ENCODE measurements at regions of chr6 and their contacts with region 1.

Region 1: DNA sequence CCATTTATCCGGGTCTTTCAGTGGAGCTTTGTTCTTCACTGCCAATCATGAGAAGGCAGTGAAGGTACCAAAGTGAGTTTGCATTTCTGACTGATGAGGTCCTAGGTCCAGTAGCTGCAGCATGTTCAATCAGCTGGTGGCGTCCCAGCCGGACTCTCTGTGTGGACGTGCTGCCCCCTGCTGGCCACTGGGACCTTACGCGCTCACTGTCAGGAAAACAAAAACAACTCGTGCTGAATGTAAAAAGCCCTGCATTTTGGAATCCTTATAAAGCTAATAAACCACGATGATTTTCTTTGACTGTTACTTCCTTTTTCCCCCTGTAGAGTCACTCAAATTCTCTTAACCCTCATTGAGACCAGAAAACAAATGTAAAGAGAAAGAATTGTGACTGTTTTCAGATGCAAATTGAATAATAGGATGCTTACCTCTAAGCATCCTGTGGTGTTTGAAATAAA is 4.9 kb upstream of the CD24 start:
- DNase-seq: peak; percentile 24
- ATAC-seq: peak; percentile 84
- H3K4me3 ChIP-seq: no peak overlapping the region
- H3K27ac ChIP-seq: no peak overlapping the region
- H3K4me1 ChIP-seq: no peaks in the 10 kb centered on the region
- H3K27me3 ChIP-seq: no peaks in the 10 kb centered on the region; a peak in 1 of 4 replicates
- CTCF ChIP-seq: peak; percentile 93 to 95 (median 95)
- EP300 ChIP-seq: no peak
- POLR2A ChIP-seq: no peak
- RAD21 ChIP-seq: peak; percentile 99

Region 2: DNA sequence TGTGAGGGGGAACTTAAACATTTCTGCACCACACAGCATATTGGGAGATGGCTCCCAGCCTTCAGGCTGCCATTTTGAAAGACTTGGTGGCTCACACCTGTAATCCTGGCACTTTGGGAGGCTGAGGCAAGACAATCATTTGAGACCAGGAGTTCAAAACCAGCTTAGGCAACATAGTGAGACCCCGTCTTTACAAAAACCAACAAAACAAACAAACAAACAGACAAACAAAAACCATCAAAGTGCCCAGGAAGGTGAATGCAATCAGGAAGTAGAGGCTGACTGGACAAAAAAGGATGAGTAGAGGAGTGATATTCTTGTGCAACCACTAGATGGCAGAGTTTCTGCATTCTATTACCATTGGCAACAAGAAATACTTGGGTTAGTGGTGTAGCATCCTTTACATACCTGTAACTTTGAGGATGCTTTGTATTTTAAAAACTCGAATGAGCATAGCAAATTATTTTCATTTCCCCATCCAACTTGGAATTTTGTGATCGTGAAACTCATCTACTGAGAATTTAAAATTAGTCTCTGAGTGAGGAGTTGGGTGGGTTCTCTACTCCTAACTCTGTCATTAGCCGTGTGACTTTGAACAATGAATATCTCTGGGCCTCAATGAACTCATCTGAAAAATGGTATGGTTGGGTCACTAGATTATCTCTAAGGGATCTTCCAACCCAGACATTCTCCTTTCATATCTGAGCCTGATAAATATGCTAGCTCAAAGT is 534.5 kb before region 1 on chr6:
- CTCF ChIA-PET with region 1: interaction called, 63 read pairs
- POLR2A ChIA-PET with region 1: no interaction called
- RAD21 ChIA-PET with region 1: interaction called, 15 read pairs
- SMC1A ChIA-PET with region 1: interaction called, 34 read pairs
- in situ Hi-C with region 1: loop called (anchors 5 kb)
- intact Hi-C with region 1: loop called (anchors 1 kb)
- DNase-seq: peak; percentile 46
- ATAC-seq: peak; percentile 92
- H3K4me3 ChIP-seq: no peak overlapping the region
- H3K27ac ChIP-seq: no peak overlapping the region
- H3K4me1 ChIP-seq: peaks cover 8% of the 10 kb centered on the region
- H3K27me3 ChIP-seq: no peaks in the 10 kb centered on the region; a peak in 1 of 4 replicates
- CTCF ChIP-seq: peak; percentile 60 to 79 (median 78)
- EP300 ChIP-seq: no peak
- POLR2A ChIP-seq: no peak
- RAD21 ChIP-seq: peak; percentile 79

Region 3: GRCh38 chr6:106608062-106608668 is 371.3 kb before region 1 on chr6:
- CTCF ChIA-PET with region 1: interaction called, 85 read pairs
- POLR2A ChIA-PET with region 1: no interaction called
- RAD21 ChIA-PET with region 1: interaction called, 20 read pairs
- SMC1A ChIA-PET with region 1: interaction called, 35 read pairs
- in situ Hi-C with region 1: loop called (anchors 5 kb)
- intact Hi-C with region 1: loop called (anchors 1 kb)
- DNase-seq: peak; percentile 40
- ATAC-seq: peak; percentile 95
- H3K4me3 ChIP-seq: no peak overlapping the region
- H3K27ac ChIP-seq: no peak overlapping the region
- H3K4me1 ChIP-seq: no peaks in the 10 kb centered on the region; the same call in 1 of the 2 replicates
- H3K27me3 ChIP-seq: no peaks in the 10 kb centered on the region
- CTCF ChIP-seq: peak; percentile 68 to 72 (median 68)
- EP300 ChIP-seq: no peak
- POLR2A ChIP-seq: no peak
- RAD21 ChIP-seq: peak; percentile 76

Region 4: GRCh38 chr6:106629103-106629858 is 350.2 kb before region 1 on chr6 and contains the starts of genes QRSL1 and RTN4IP1:
- CTCF ChIA-PET with region 1: interaction called, 10 read pairs
- POLR2A ChIA-PET with region 1: interaction called, 12 read pairs
- RAD21 ChIA-PET with region 1: interaction called, 3 read pairs
- SMC1A ChIA-PET with region 1: interaction called, 4 read pairs
- in situ Hi-C with region 1: no loop called
- intact Hi-C with region 1: no loop called
- DNase-seq: peak; percentile 88
- ATAC-seq: peak; percentile 89
- H3K4me3 ChIP-seq: peak within 1 kb of the TSS; percentile 95
- H3K27ac ChIP-seq: peak within 1 kb of the TSS; percentile 81
- H3K4me1 ChIP-seq: peaks cover 16% of the 10 kb centered on the region; the same call in 1 of the 2 replicates
- H3K27me3 ChIP-seq: no peaks in the 10 kb centered on the region
- CTCF ChIP-seq: no peak
- EP300 ChIP-seq: 0 out of 4 replicates have a peak, but pooled peaks of 1 of the 2 experiments have one; percentile 6
- POLR2A ChIP-seq: peak; percentile 81
- RAD21 ChIP-seq: no peak
- polyA plus RNA-seq, gene QRSL1: 11.9 to 15.1 TPM
- polyA plus RNA-seq, gene RTN4IP1: 15.8 to 17.0 TPM

Region 5: GRCh38 chr6:106778943-106779342 is 200.5 kb before region 1 on chr6:
- CTCF ChIA-PET with region 1: no interaction called
- POLR2A ChIA-PET with region 1: no interaction called
- RAD21 ChIA-PET with region 1: no interaction called
- SMC1A ChIA-PET with region 1: no interaction called
- in situ Hi-C with region 1: no loop called
- intact Hi-C with region 1: no loop called
- DNase-seq: no peak
- ATAC-seq: no peak
- H3K4me3 ChIP-seq: no peak overlapping the region
- H3K27ac ChIP-seq: no peak overlapping the region
- H3K4me1 ChIP-seq: no peaks in the 10 kb centered on the region
- H3K27me3 ChIP-seq: no peaks in the 10 kb centered on the region
- CTCF ChIP-seq: no peak
- EP300 ChIP-seq: no peak
- POLR2A ChIP-seq: no peak
- RAD21 ChIP-seq: no peak

Region 6: DNA sequence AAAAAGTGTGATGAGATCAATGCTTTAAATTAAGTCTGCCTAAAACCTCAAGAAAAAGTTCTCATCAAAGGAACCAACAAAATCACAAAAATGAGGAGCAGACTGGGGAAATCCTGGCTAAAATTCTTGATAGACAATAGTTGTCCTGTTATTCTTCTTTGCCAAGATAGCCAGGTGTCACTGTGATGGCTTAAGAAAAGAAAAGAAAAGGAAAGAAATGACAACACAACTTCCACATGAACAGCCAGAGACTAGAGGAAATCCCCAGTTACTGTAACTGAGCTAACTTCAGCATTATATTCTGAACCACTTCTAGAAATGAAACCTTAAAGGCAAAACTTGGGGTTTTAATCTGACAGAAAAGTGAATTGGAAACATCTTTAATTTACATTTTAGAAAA is 134.5 kb before region 1 on chr6:
- CTCF ChIA-PET with region 1: interaction called, 3 read pairs
- POLR2A ChIA-PET with region 1: no interaction called
- RAD21 ChIA-PET with region 1: interaction called, 3 read pairs
- SMC1A ChIA-PET with region 1: interaction called, 3 read pairs
- in situ Hi-C with region 1: no loop called
- intact Hi-C with region 1: loop called (anchors 5 kb)
- DNase-seq: peak; percentile 65
- ATAC-seq: peak; percentile 75
- H3K4me3 ChIP-seq: peak overlapping the region; percentile 27; the same call in 1 of the 2 replicates
- H3K27ac ChIP-seq: peak overlapping the region; percentile 96
- H3K4me1 ChIP-seq: peaks cover 44% of the 10 kb centered on the region
- H3K27me3 ChIP-seq: no peaks in the 10 kb centered on the region
- CTCF ChIP-seq: no peak
- EP300 ChIP-seq: peak; percentile 43 to 60; a peak in 2 of 4 replicates
- POLR2A ChIP-seq: no peak
- RAD21 ChIP-seq: no peak

Region 7: DNA sequence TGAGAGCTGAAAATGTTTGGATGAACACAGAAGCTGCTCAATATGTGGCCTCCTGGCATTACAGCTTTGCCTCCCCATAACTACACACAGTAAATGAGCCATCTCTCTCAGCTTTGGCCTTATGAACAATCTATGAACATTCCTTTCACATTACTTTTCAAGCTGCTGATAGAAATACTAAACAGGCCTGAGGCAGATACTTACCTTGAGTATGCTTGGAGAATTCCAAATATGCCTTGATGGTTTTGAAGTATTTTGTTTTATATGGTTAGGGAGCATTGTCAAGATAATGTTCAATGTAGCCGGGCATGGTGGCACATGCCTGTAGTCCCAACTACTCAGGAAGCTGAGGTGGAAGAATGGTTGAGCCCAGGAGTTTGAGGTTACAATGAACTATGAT is 109.4 kb before region 1 on chr6:
- CTCF ChIA-PET with region 1: no interaction called
- POLR2A ChIA-PET with region 1: no interaction called
- RAD21 ChIA-PET with region 1: no interaction called
- SMC1A ChIA-PET with region 1: no interaction called
- in situ Hi-C with region 1: no loop called
- intact Hi-C with region 1: no loop called
- DNase-seq: no peak
- ATAC-seq: no peak
- H3K4me3 ChIP-seq: no peak overlapping the region
- H3K27ac ChIP-seq: no peak overlapping the region
- H3K4me1 ChIP-seq: no peaks in the 10 kb centered on the region
- H3K27me3 ChIP-seq: no peaks in the 10 kb centered on the region
- CTCF ChIP-seq: no peak
- EP300 ChIP-seq: no peak
- POLR2A ChIP-seq: no peak
- RAD21 ChIP-seq: no peak

Region 8: GRCh38 chr6:107021446-107022185 is 42.2 kb after region 1 on chr6:
- CTCF ChIA-PET with region 1: no interaction called
- POLR2A ChIA-PET with region 1: no interaction called
- RAD21 ChIA-PET with region 1: no interaction called
- SMC1A ChIA-PET with region 1: no interaction called
- in situ Hi-C with region 1: no loop called
- intact Hi-C with region 1: no loop called
- DNase-seq: no peak
- ATAC-seq: no peak
- H3K4me3 ChIP-seq: no peak overlapping the region
- H3K27ac ChIP-seq: no peak overlapping the region
- H3K4me1 ChIP-seq: no peaks in the 10 kb centered on the region
- H3K27me3 ChIP-seq: no peaks in the 10 kb centered on the region
- CTCF ChIP-seq: no peak
- EP300 ChIP-seq: no peak
- POLR2A ChIP-seq: no peak
- RAD21 ChIP-seq: no peak

Region 9: DNA sequence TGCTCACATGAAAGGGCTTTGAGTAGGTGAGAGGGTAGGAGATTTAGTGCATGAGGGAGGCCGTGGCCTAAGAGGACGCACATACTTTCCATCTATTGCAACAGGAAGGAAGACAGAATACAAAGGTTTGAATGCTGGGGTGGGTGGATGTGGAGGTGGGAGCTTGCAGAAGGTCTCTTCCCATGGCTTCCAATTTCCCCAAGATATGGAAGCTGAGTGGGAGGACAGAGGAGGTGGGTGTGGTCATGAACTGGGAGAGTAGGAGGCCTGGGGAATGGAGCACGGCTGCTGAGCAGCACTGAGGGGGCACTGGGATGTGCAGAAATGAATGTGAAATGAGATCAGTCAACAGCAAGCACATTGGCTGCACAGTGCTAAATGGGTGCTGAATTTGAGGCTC is 774.3 kb after region 1 on chr6:
- CTCF ChIA-PET with region 1: no interaction called
- POLR2A ChIA-PET with region 1: no interaction called
- RAD21 ChIA-PET with region 1: no interaction called
- SMC1A ChIA-PET with region 1: no interaction called
- in situ Hi-C with region 1: no loop called
- intact Hi-C with region 1: no loop called
- DNase-seq: no peak
- ATAC-seq: no peak
- H3K4me3 ChIP-seq: no peak overlapping the region
- H3K27ac ChIP-seq: no peak overlapping the region
- H3K4me1 ChIP-seq: no peaks in the 10 kb centered on the region
- H3K27me3 ChIP-seq: peaks cover 0 to 2% of the 10 kb centered on the region in 2 experiments; a peak in 1 of 4 replicates
- CTCF ChIP-seq: no peak
- EP300 ChIP-seq: no peak
- POLR2A ChIP-seq: no peak
- RAD21 ChIP-seq: no peak

Measured in GM12878 (cell line).